ENCODE measurements at regions of chr3 and their contacts with region 1.

Region 1: GRCh38 chr3:42749753-42750231 is 23.3 kb downstream of the CCDC13 start:
- DNase-seq: peak; percentile 23 to 60 (median 48)
- H3K4me3 ChIP-seq: no peak overlapping the region
- H3K27ac ChIP-seq: no peak overlapping the region
- H3K4me1 ChIP-seq: no peaks in the 10 kb centered on the region
- H3K27me3 ChIP-seq: peaks cover 0 to 2% (median 0%) of the 10 kb centered on the region in 5 experiments

Region 2: GRCh38 chr3:42739401-42740158 is 10.2 kb before region 1 on chr3:
- CTCF ChIA-PET with region 1: interaction called, 49 read pairs
- POLR2A ChIA-PET with region 1: no interaction called
- DNase-seq: peak; percentile 22 to 70 (median 47)
- H3K4me3 ChIP-seq: no peak overlapping the region
- H3K27ac ChIP-seq: no peak overlapping the region
- H3K4me1 ChIP-seq: peaks cover 0 to 12% (median 6%) of the 10 kb centered on the region in 4 experiments
- H3K27me3 ChIP-seq: no peaks in the 10 kb centered on the region

Region 3: GRCh38 chr3:42763021-42763420 is 13.2 kb after region 1 on chr3:
- CTCF ChIA-PET with region 1: interaction called, 49 read pairs
- POLR2A ChIA-PET with region 1: interaction called, 3 read pairs
- DNase-seq: no peak
- H3K4me3 ChIP-seq: no peak overlapping the region
- H3K27ac ChIP-seq: no peak overlapping the region
- H3K4me1 ChIP-seq: peaks cover 0 to 21% (median 7%) of the 10 kb centered on the region in 4 experiments
- H3K27me3 ChIP-seq: no peaks in the 10 kb centered on the region

Region 4: DNA sequence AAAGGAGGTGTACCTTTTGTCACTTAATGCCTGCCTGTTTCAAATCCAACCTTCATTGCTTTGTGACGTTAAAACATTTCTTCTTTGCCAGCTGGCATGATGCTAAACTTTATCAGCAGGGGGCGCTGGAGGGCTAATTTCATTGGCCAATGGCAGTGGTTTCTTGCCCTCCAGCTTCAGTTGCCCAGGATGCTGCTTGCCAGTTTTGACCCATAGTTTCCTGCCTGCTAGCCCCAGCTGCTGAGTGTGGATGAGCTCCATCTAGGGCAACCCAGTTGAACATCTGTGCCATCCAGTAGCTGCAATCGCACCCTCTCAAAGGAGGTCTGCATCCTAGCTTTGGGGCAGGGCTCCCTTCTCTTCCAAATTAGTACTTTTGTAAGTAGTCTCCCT is 81.5 kb after region 1 on chr3:
- CTCF ChIA-PET with region 1: interaction called, 13 read pairs
- POLR2A ChIA-PET with region 1: no interaction called
- DNase-seq: peak; percentile 79 to 88 (median 86)
- H3K4me3 ChIP-seq: peak overlapping the region in 1 of 7 experiments; percentile 1
- H3K27ac ChIP-seq: no peak overlapping the region
- H3K4me1 ChIP-seq: peaks cover 0 to 6% (median 0%) of the 10 kb centered on the region in 4 experiments
- H3K27me3 ChIP-seq: no peaks in the 10 kb centered on the region